ENCODE measurements at regions of chr7 and their contacts with region 1.

Region 1: DNA sequence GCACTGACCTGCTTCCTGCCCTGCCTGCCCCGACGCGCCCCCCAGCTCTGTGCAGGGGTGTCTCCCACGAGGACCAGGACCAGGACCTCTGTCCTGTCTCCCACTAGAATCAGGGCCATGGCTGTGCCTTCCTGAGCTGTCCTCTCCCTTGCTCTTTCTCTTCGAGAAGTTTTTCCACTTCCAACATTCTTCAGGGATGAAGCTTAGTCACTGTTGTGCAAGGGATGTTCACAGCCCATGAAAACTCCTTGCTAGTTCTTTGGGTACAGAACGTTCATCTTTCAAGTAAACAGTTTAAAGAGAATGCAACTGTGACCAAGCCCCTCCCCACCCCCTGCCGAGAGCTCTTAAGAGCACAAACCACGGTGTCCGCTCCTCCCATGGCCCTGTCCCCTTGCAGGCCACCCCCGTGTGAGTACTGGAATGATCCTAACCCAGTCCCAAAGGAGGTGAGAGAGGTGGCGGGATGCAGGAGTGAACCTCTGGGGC is 161.1 kb upstream of the RHEB start:
- DNase-seq: peak; percentile 86
- H3K4me3 Mint-ChIP-seq: peak overlapping the region; percentile 62
- H3K27ac Mint-ChIP-seq: peak overlapping the region; percentile 98
- H3K4me1 Mint-ChIP-seq: peaks cover 40% of the 10 kb centered on the region
- H3K27me3 Mint-ChIP-seq: no peaks in the 10 kb centered on the region
- CTCF ChIP-seq: no peak

Region 2: DNA sequence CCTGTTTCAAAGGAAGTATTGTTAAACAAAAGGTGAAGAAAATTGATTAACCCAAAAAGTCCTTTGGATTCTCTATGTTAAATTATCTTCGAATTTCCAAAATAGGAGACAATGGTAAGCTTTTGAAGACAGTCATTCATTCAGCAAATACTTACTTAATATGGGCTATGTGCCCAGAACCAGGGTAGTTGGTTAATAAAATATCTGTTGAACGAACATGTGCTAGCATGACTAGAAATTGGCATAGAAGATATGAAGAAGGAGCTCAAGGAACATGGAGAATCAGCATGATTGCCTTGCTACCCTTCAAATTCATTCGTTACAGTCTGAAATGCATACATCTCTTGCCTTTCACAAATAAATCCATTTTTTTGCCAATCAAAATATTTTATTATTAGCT is 38.0 kb before region 1 on chr7:
- CTCF ChIA-PET with region 1: interaction called, 5 read pairs
- POLR2A ChIA-PET with region 1: interaction called, 10 read pairs
- intact Hi-C with region 1: no loop called
- DNase-seq: peak; percentile 67
- H3K4me3 Mint-ChIP-seq: no peak overlapping the region
- H3K27ac Mint-ChIP-seq: peak overlapping the region; percentile 79
- H3K4me1 Mint-ChIP-seq: peaks cover 40% of the 10 kb centered on the region
- H3K27me3 Mint-ChIP-seq: no peaks in the 10 kb centered on the region
- CTCF ChIP-seq: no peak

Region 3: DNA sequence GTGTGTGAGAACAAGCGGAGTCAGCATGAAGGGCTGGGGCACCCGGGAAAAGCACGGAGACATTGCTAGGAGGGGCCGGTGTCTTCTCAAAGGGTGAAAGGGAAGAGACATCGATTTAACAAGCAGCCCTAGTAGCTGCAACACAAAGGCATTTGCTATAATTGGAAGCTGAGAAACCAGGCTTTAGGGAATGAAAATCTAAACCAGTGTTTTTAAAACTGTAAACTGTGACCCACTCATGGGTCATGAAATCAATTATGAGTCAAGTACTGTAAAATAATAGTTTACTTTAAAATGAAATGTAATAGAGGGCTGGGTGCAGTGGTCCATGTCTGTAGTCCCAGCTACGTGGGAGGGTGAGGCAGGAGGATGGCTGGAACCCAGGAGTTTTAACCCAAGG is 32.3 kb before region 1 on chr7:
- CTCF ChIA-PET with region 1: no interaction called
- POLR2A ChIA-PET with region 1: interaction called, 13 read pairs
- intact Hi-C with region 1: no loop called
- DNase-seq: no peak
- H3K4me3 Mint-ChIP-seq: no peak overlapping the region
- H3K27ac Mint-ChIP-seq: no peak overlapping the region
- H3K4me1 Mint-ChIP-seq: peaks cover 29% of the 10 kb centered on the region
- H3K27me3 Mint-ChIP-seq: no peaks in the 10 kb centered on the region
- CTCF ChIP-seq: no peak

Measured in MCF 10A (cell line).